ENCODE measurements at regions of chr3 and their contacts with region 1.

Region 1: DNA sequence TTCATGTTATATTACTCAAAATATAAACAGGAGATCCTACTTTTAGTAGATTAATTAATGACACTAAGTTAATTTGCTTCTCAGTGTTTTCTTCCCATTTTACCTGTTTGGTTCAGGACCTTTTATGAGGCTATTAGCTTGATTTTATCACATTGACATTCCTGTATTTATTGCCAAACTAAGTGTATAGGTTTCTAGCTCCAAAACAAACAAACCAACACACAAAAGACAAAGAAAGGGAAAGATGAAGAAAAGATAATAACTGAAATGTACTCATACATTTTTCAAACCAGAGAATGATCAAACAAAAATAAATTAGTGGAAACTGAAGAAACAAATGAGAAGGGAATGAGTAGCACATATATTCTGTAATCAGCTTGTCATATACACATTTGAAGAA is 160.5 kb downstream of the PLOD2 start:
- DNase-seq: no peak
- H3K4me3 Mint-ChIP-seq: no peak overlapping the region
- H3K27ac Mint-ChIP-seq: no peak overlapping the region
- H3K4me1 Mint-ChIP-seq: no peaks in the 10 kb centered on the region
- H3K27me3 Mint-ChIP-seq: no peaks in the 10 kb centered on the region
- CTCF ChIP-seq: no peak

Region 2: GRCh38 chr3:146037697-146038096 is 37.2 kb after region 1 on chr3:
- CTCF ChIA-PET with region 1: interaction called, 10 read pairs
- intact Hi-C with region 1: no loop called
- DNase-seq: no peak
- H3K4me3 Mint-ChIP-seq: no peak overlapping the region
- H3K27ac Mint-ChIP-seq: no peak overlapping the region
- H3K4me1 Mint-ChIP-seq: no peaks in the 10 kb centered on the region
- H3K27me3 Mint-ChIP-seq: no peaks in the 10 kb centered on the region
- CTCF ChIP-seq: no peak